GM13977 (cell line): ENCODE measurements at regions of chr7 and their contacts with region 1.

Region 1: DNA sequence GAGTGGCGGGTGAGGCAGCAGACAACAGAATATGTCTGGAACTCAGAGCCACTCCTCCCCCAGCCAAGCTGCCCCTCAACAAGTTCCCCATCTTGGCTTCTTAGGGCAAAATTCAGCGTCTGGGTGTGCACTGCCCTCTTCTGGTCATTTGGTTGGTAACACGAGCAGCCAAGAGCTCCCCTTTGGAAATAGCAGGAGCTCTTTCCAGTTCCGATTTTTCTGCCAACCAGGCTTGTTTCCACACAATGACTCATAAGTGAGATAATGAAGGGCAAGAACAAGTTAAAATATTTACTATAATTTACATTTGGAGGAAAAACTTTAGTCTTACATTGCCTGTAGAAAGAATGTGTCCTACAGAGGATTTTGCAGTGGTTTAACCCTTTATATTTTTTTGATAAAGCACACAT is 70.5 kb downstream of the ADCYAP1R1 start:
- DNase-seq: peak; percentile 57
- CTCF ChIP-seq: peak; percentile 84

Region 2: GRCh38 chr7:30548762-30549344 is 573.8 kb before region 1 on chr7:
- in situ Hi-C with region 1: no loop called
- DNase-seq: peak; percentile 46
- CTCF ChIP-seq: peak; percentile 64

Region 3: DNA sequence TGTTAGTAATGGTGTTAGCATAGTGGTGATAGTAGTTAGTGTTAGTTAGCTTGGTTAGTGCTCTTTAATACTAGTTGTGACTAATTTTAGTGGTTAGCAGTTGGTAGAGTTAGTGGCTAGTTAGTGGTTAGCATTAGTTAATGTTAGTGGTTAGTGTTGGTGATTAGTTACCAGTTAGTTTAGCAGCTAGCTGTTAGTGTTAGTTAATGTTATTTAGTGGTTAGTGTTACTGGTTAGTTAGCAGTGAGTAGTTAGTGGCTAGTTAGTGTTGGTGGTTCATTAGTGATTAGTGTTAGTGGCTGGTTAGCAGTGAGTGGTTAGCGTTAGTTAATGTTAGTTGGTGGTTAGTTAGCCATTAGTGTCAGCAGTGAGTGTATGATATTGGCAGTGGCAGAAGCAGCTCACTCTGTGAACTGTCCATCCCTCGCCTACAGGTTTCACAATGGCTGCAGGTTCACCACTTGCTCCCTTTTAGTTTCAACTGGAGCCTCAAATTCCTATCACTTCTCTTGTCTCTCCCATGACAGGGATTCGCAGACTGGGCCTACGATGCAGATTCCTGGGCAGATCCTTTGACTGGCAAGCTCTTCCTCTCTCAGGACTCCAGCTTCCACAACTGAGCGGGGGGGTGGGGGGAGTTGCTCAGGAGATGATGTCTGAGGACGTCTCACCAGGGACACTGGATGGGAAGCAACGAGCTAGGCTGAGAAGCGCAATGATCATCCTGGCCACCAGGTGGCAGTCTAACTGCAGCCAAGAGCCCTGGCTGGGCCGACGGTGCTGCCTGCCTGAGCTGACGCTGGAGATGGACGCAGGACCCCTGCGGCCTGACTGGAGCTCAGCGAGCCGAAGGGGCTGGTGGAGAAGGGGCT is 139.4 kb before region 1 on chr7:
- in situ Hi-C with region 1: loop called (anchors 10 kb)
- DNase-seq: peak; percentile 84
- CTCF ChIP-seq: peak; percentile 99

Region 4: GRCh38 chr7:30996256-30996655 is 126.4 kb before region 1 on chr7:
- in situ Hi-C with region 1: no loop called
- DNase-seq: no peak
- CTCF ChIP-seq: no peak

Region 5: DNA sequence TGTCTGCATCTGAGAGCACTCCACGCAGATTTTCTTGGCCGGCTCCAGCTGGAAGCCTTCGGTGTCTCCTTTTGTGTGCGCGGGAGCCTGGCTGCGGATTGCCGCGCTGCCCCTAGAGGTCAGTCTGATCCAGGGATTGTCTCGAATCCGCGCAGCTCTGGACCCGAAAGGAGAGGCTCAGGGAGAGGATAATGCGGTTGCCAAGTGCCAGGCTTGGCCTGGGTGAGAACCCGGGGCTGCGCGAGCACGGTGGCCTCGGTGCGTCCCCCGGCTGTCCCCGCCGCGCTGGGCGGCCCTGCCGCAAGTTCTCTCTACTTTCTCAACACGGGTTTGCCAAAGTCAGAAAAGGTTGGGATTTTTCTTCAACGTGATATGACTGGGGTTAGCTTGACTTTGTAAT is 70.3 kb after region 1 on chr7:
- in situ Hi-C with region 1: no loop called
- DNase-seq: peak; percentile 34
- CTCF ChIP-seq: peak; percentile 52

Region 6: GRCh38 chr7:31729198-31729781 is 606.6 kb after region 1 on chr7:
- in situ Hi-C with region 1: no loop called
- DNase-seq: no peak
- CTCF ChIP-seq: no peak